ENCODE measurements at regions of chr12 and their contacts with region 1.

Region 1: DNA sequence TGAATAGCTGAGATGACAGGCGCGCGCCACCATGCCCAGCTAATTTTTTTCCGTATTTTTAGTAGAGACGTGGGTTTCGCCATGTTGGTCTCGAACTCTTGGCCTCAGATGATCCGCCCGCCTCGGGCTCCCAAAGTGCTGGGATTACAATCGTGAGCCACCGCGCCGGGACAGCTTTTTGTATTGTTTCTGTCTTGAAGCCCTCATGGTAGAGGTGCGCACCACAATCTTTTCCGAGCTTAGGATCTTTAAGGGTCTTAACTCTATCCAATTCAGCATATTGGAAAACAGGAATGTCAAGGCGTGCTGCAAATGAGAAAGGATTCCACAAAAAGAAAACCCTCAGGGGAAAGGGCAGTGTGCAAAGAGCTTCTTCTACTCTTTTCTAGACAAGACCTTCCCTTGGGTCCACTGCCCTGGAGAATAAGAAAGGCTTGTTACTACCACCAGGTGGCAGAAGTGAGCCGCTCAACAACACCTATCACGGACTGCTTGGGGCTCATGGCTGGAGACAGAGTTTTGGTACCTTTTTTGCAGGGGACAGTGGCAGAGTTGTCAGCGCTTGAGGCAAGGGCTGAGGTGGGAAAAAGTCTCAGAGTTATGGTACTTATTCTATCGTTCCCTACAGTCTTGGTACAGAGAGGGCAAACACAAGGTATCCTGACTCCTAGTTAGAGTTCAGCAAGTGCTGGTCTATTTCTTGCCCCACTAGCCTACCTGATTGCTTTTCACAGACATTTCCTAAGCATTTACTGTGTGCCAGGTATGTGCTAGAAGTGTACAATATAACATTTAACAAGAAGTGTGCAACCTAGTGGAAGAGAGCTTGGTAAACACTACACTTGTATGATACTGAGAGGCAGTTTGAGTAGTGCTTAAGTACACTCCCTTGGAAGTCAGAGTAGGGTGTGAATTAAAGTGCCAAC is 16.4 kb upstream of the SP7 start:
- DNase-seq: peak; percentile 73
- H3K4me3 Mint-ChIP-seq: no peak overlapping the region
- H3K27ac Mint-ChIP-seq: peak overlapping the region; percentile 60
- H3K4me1 Mint-ChIP-seq: peaks cover 8% of the 10 kb centered on the region
- H3K27me3 Mint-ChIP-seq: no peaks in the 10 kb centered on the region

Region 2: GRCh38 chr12:53241623-53242412 is 110.8 kb before region 1 on chr12:
- intact Hi-C with region 1: no loop called
- DNase-seq: no peak
- H3K4me3 Mint-ChIP-seq: no peak overlapping the region
- H3K27ac Mint-ChIP-seq: no peak overlapping the region
- H3K4me1 Mint-ChIP-seq: peaks cover 7% of the 10 kb centered on the region
- H3K27me3 Mint-ChIP-seq: peaks cover 29% of the 10 kb centered on the region

Region 3: DNA sequence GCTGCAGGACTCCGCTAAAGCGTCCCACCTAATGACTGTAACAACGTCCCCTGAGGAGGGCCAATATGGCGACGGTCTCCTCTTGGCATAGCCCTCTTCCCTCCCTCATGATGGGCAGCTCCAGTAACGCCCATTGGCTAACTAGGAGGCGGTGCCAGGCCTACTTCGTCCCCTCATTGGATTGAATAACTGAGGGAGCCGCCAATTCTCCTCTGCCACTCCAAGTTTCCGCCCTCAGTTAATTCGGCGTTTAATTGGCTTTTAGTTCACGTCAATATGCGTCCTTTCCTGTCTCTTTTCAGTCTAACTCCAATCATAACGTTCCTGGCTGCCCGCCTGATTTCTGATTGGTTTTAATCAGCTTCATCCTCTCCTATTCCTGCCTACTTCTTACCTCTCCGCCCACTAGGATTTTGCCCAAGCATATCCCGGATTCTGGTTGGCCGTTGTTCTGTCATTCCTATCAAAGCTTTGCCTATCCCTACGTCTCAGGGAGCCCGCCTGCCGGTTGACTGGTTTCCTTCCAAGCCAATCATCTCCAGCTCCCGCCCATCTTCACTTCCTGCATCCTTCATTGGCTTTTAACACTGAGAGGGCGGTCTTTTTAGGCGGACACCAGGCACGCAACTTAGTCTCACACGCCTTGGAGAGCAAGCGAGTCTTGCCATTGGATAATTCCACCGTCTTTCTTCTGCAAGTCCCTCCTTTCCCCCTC is 27.0 kb after region 1 on chr12:
- intact Hi-C with region 1: loop called (anchors 1 kb)
- DNase-seq: peak; percentile 98
- H3K4me3 Mint-ChIP-seq: no peak overlapping the region
- H3K27ac Mint-ChIP-seq: no peak overlapping the region
- H3K4me1 Mint-ChIP-seq: peaks cover 35% of the 10 kb centered on the region
- H3K27me3 Mint-ChIP-seq: no peaks in the 10 kb centered on the region

Region 4: GRCh38 chr12:53414756-53415417 is 62.3 kb after region 1 on chr12:
- intact Hi-C with region 1: loop called (anchors 1 kb)
- DNase-seq: no peak
- H3K4me3 Mint-ChIP-seq: no peak overlapping the region
- H3K27ac Mint-ChIP-seq: no peak overlapping the region
- H3K4me1 Mint-ChIP-seq: peaks cover 39% of the 10 kb centered on the region
- H3K27me3 Mint-ChIP-seq: no peaks in the 10 kb centered on the region

Region 5: GRCh38 chr12:53424626-53425514 is 72.3 kb after region 1 on chr12:
- intact Hi-C with region 1: loop called (anchors 1 kb)
- DNase-seq: no peak
- H3K4me3 Mint-ChIP-seq: no peak overlapping the region
- H3K27ac Mint-ChIP-seq: no peak overlapping the region
- H3K4me1 Mint-ChIP-seq: peaks cover 12% of the 10 kb centered on the region
- H3K27me3 Mint-ChIP-seq: no peaks in the 10 kb centered on the region

Region 6: GRCh38 chr12:53481957-53482586 is 129.5 kb after region 1 on chr12:
- intact Hi-C with region 1: no loop called
- DNase-seq: no peak
- H3K4me3 Mint-ChIP-seq: no peak overlapping the region
- H3K27ac Mint-ChIP-seq: no peak overlapping the region
- H3K4me1 Mint-ChIP-seq: no peaks in the 10 kb centered on the region
- H3K27me3 Mint-ChIP-seq: no peaks in the 10 kb centered on the region

Region 7: GRCh38 chr12:53508534-53509199 is 156.1 kb after region 1 on chr12:
- intact Hi-C with region 1: loop called (anchors 1 kb)
- DNase-seq: peak; percentile 77
- H3K4me3 Mint-ChIP-seq: peak overlapping the region; percentile 8
- H3K27ac Mint-ChIP-seq: peak overlapping the region; percentile 58
- H3K4me1 Mint-ChIP-seq: peaks cover 6% of the 10 kb centered on the region
- H3K27me3 Mint-ChIP-seq: no peaks in the 10 kb centered on the region

Region 8: GRCh38 chr12:54795644-54796043 is 1443.0 kb after region 1 on chr12:
- intact Hi-C with region 1: no loop called
- DNase-seq: no peak
- H3K4me3 Mint-ChIP-seq: no peak overlapping the region
- H3K27ac Mint-ChIP-seq: no peak overlapping the region
- H3K4me1 Mint-ChIP-seq: no peaks in the 10 kb centered on the region
- H3K27me3 Mint-ChIP-seq: peaks cover 4% of the 10 kb centered on the region

Measured in activated T-helper 2 cell treated with anti-CD3 and anti-CD28 coated beads, Interferon-gamma antibody, Interleukin-2, Interleukin-4, amounts not matched to agents 10 μg/mL and 5 μg/mL and 100 μg/mL, durations not matched to agents 14 hours and 24 hours and 36 hours (primary cell).